AG04449 (cell line): ENCODE measurements at regions of chr9 and their contacts with region 1.

Region 1: DNA sequence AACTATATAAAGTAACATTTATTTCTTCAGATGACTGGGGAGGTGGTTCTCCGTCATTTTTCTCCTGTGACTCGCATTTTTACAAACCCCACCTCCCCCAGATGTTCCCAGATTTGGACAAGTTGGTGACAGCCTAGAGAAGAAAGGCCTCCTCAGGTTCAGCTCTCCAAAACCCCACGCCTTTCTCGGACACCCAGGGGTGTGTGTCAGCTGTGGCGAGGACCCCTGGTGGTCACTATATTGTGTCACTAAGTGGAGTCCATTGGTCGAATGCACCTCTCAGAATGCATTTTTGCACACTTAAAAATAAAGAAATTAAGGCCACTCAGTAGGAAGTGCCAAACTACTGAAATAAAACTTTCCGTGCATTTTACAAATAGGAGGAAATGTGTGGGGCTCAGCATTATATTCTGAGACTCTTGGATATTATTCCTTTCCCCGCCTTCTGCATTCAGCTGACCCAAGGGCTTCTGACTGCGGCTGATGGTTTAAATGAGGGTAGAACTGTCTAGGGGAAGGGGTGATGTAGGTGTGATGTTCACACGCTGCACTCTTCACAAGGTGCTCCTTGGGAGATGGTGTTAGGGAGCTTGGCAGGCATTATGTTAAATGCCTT is 47.6 kb downstream of the ACO1 start:
- DNase-seq: no peak
- H3K4me3 ChIP-seq: no peak overlapping the region
- CTCF ChIP-seq: peak; percentile 53

Region 2: GRCh38 chr9:32442433-32442832 is 10.4 kb after region 1 on chr9:
- CTCF ChIA-PET with region 1: interaction called, 24 read pairs
- POLR2A ChIA-PET with region 1: no interaction called
- DNase-seq: no peak
- H3K4me3 ChIP-seq: no peak overlapping the region
- CTCF ChIP-seq: no peak